Left ventricle myocardium inferior (tissue), 1 donor: ENCODE measurements at regions of chr6 and their contacts with region 1.

Region 1: DNA sequence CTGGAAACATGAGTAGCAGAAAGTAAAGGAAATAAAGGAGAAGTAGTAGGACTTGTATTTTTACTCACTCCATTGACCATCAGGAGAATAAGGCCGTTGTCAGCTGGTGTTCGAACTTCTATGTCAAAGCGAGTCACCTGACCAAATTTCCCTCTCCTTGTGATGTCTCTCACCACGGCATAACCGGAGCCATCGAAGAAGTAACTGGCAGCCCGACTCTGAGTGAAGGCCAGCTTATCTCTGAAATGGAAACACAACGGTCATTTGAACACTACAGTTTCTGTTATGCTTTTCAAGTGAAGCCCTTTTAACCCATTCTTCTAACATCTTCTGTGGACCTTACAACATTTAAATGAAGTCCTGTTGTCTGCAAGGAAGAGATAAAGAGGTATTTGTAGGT is 51.7 kb downstream of the FAM229B start:
- DNase-seq: no peak
- H3K4me3 ChIP-seq: no peak overlapping the region
- H3K27ac ChIP-seq: peak overlapping the region; percentile 31
- H3K4me1 ChIP-seq: peaks cover 6% of the 10 kb centered on the region
- H3K27me3 ChIP-seq: no peaks in the 10 kb centered on the region
- CTCF ChIP-seq: no peak

Region 2: DNA sequence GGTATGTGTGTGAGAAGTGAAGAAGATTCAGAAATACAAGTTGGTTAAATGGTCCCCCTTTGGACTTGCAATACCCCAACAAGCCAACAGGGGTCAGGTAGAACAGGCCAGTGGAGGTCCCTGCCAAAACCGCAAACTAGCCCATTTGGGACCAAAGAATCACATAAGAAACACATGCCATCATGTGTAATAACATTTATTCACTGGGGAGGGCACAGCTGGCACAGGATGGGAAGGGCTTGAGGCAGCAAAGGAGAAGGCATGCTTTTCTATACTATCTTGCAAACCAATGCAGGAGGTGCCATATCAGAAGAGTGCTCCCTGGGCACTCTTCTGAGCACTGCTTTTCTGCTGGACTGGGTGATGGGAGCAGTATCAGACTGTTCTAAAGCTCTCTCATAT is 417.3 kb before region 1 on chr6:
- intact Hi-C with region 1: no loop called
- DNase-seq: no peak
- H3K4me3 ChIP-seq: no peak overlapping the region
- H3K27ac ChIP-seq: peak overlapping the region; percentile 39
- H3K4me1 ChIP-seq: peaks cover 49% of the 10 kb centered on the region
- H3K27me3 ChIP-seq: no peaks in the 10 kb centered on the region
- CTCF ChIP-seq: peak; percentile 55

Region 3: GRCh38 chr6:112076200-112076599 is 62.9 kb before region 1 on chr6:
- intact Hi-C with region 1: loop called (anchors 10 kb)
- DNase-seq: no peak
- H3K4me3 ChIP-seq: no peak overlapping the region
- H3K27ac ChIP-seq: no peak overlapping the region
- H3K4me1 ChIP-seq: peaks cover 9% of the 10 kb centered on the region
- H3K27me3 ChIP-seq: no peaks in the 10 kb centered on the region
- CTCF ChIP-seq: no peak

Region 4: GRCh38 chr6:112223070-112223861 is 84.2 kb after region 1 on chr6:
- intact Hi-C with region 1: no loop called
- DNase-seq: no peak
- H3K4me3 ChIP-seq: no peak overlapping the region
- H3K27ac ChIP-seq: peak overlapping the region; percentile 89
- H3K4me1 ChIP-seq: peaks cover 97% of the 10 kb centered on the region
- H3K27me3 ChIP-seq: no peaks in the 10 kb centered on the region
- CTCF ChIP-seq: no peak